Caco-2 (cell line): ENCODE measurements at regions of chr2 and their contacts with region 1.

Region 1: DNA sequence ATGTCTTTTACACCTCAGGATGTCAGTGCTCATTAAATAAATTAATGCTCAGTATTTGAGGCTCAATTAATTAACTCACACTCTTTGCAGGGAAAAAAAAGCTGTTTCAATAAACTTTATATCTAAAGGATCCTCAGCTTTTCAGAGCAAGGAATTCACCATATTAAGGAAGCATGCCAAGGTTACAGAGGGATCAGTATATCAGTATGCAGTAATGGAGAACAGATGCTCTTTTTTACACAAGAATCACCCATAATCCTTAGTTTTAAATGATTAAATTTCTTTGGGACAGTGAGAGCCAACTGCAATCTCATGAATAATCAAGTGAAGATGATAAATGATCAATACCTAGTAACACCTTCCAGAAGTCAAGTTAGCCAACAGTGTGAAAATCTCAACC is 14.9 kb upstream of the LCT start:
- DNase-seq: no peak
- H3K4me3 ChIP-seq: no peak overlapping the region
- H3K4me3 Mint-ChIP-seq: no peak overlapping the region
- H3K27ac Mint-ChIP-seq: peak overlapping the region; percentile 82
- H3K4me1 ChIP-seq: peaks cover 41% of the 10 kb centered on the region
- H3K4me1 Mint-ChIP-seq: peaks cover 27% of the 10 kb centered on the region
- H3K27me3 ChIP-seq: no peaks in the 10 kb centered on the region
- H3K27me3 Mint-ChIP-seq: no peaks in the 10 kb centered on the region
- CTCF ChIP-seq: no peak

Region 2: GRCh38 chr2:135876066-135876711 is 24.3 kb after region 1 on chr2 and contains the start of gene MCM6:
- CTCF ChIA-PET with region 1: no interaction called
- POLR2A ChIA-PET with region 1: interaction called, 5 read pairs
- intact Hi-C with region 1: loop called (anchors 1 kb)
- DNase-seq: peak; percentile 99 to 100
- H3K4me3 ChIP-seq: peak within 1 kb of the TSS; percentile 93
- H3K4me3 Mint-ChIP-seq: peak within 1 kb of the TSS; percentile 81
- H3K27ac Mint-ChIP-seq: peak within 1 kb of the TSS; percentile 81
- H3K4me1 ChIP-seq: peaks cover 23% of the 10 kb centered on the region
- H3K4me1 Mint-ChIP-seq: peaks cover 21% of the 10 kb centered on the region
- H3K27me3 ChIP-seq: no peaks in the 10 kb centered on the region
- H3K27me3 Mint-ChIP-seq: no peaks in the 10 kb centered on the region
- CTCF ChIP-seq: peak in 1 of 2 experiments; percentile 18
- total RNA-seq, gene MCM6: 94.6 and 96.0 TPM in 2 replicates

Region 3: GRCh38 chr2:136185981-136186776 is 334.3 kb after region 1 on chr2:
- CTCF ChIA-PET with region 1: no interaction called
- POLR2A ChIA-PET with region 1: no interaction called
- intact Hi-C with region 1: no loop called
- DNase-seq: no peak
- H3K4me3 ChIP-seq: no peak overlapping the region
- H3K4me3 Mint-ChIP-seq: no peak overlapping the region
- H3K27ac Mint-ChIP-seq: no peak overlapping the region
- H3K4me1 ChIP-seq: no peaks in the 10 kb centered on the region
- H3K4me1 Mint-ChIP-seq: no peaks in the 10 kb centered on the region
- H3K27me3 ChIP-seq: no peaks in the 10 kb centered on the region
- H3K27me3 Mint-ChIP-seq: no peaks in the 10 kb centered on the region
- CTCF ChIP-seq: no peak